HEK293T (cell line): ENCODE measurements at regions of chr2 and their contacts with region 1.

Region 1: GRCh38 chr2:202193881-202194353 is 44.5 kb downstream of the SUMO1 start:
- DNase-seq: no peak

Region 2: DNA sequence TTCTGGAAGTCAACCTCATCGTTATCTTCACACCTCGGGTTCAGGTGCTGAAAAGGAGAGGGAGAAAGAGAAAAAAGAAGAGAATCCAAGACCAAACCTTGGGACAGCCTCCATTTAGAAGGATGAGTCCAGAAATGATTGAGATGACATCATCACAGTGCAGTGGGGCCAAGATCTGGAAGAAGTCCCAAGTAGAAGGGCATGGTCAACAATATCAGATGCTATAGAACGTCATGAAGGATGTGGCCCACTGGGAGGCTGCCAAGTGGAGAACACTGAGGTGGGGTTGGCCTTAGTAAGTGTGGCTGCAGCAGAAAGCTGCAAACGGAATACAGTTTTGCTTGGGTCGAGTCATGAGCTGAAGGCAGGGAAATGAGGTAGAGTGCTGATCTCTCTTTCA is 251.4 kb before region 1 on chr2:
- CTCF ChIA-PET with region 1: interaction called, 10 read pairs
- POLR2A ChIA-PET with region 1: no interaction called
- DNase-seq: no peak